ENCODE measurements at regions of chr5 and their contacts with region 1.

Region 1: GRCh38 chr5:96384353-96384752 is 48.7 kb downstream of the PCSK1 start:
- DNase-seq: no peak
- CTCF ChIP-seq: no peak

Region 2: DNA sequence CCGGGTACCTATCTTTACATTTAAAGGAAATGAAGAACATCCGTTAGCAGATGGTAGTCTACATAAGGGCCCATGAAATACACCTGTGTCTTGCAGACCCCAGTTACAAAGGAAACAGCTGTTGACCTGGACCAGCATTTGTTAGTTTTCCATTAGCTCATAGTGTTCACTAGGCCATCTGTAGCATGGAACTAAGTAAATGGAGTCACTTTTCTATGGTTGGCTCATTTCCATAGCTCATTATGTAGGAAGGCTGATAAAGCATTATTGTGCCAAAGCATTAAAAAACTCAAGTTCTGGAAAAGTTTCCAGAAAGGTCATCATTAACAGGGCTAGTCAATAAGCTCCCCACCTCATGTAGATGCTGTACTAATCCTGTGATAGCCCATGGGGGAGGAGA is 13.4 kb before region 1 on chr5:
- CTCF ChIA-PET with region 1: interaction called, 18 read pairs
- POLR2A ChIA-PET with region 1: no interaction called
- DNase-seq: no peak
- CTCF ChIP-seq: no peak